Activated T-helper 1 cell treated with anti-CD3 and anti-CD28 coated beads, Interleukin-12 subunit alpha, Interleukin-12 subunit beta, Interleukin-2, Interleukin-4 antibody, amounts not matched to agents 30 ng/mL and 10 ng/mL and 1 ng/mL, durations not matched to agents 14 hours and 24 hours and 36 hours (primary cell): ENCODE measurements at regions of chr7 and their contacts with region 1.

Region 1: GRCh38 chr7:50142425-50143017 is 49.5 kb upstream of the ZPBP start:
- DNase-seq: no peak
- H3K4me3 Mint-ChIP-seq: peak overlapping the region; percentile 27
- H3K27ac Mint-ChIP-seq: peak overlapping the region; percentile 2
- H3K4me1 Mint-ChIP-seq: peaks cover 34% of the 10 kb centered on the region
- H3K27me3 Mint-ChIP-seq: peaks cover 11% of the 10 kb centered on the region

Region 2: DNA sequence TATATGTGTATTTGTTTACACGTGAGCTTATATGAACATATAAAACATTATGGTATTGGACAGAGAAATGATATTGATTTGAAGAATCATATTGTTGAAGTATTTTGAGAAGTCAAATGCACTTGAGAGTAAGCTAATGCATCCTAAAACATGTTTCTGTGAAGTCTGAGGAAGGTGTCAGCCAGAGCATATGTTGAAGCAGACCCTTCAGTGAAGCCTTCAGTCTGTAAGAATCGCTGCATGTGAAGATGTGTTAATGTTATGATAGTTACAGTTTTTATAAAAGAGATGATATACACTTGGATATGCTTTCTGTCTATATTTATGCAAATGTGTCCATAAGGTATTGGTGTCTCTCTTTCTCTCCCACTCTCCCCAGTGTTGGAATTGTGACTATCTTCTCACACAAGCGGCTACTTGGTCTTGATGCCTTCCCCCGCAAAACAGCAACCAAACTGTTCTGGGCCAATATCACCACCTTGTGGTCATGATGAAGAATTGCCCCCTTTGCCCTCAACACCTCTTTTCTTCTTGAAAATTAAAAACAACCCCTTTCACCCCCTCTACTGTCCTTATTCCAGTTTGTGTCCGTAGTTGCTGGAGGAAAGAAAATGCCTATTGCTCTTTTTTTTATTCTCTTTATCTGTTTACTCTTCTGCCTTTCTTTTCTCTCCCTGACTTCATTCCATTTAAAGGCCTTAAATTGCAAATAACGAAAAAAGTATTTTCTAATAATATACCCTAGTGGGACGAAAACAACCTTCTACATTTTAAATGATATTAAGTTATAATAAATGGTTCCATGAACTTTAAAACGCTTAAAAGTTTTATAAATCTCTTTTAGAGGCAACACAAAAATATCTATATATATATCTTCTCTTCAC is 226.9 kb after region 1 on chr7:
- intact Hi-C with region 1: loop called (anchors 1 kb)
- DNase-seq: no peak
- H3K4me3 Mint-ChIP-seq: peak overlapping the region; percentile 45
- H3K27ac Mint-ChIP-seq: peak overlapping the region; percentile 85
- H3K4me1 Mint-ChIP-seq: peaks cover 100% of the 10 kb centered on the region
- H3K27me3 Mint-ChIP-seq: no peaks in the 10 kb centered on the region

Region 3: GRCh38 chr7:50467817-50468610 is 325.5 kb after region 1 on chr7:
- intact Hi-C with region 1: loop called (anchors 2 kb)
- DNase-seq: peak; percentile 69
- H3K4me3 Mint-ChIP-seq: no peak overlapping the region
- H3K27ac Mint-ChIP-seq: no peak overlapping the region
- H3K4me1 Mint-ChIP-seq: peaks cover 12% of the 10 kb centered on the region
- H3K27me3 Mint-ChIP-seq: peaks cover 12% of the 10 kb centered on the region

Region 4: DNA sequence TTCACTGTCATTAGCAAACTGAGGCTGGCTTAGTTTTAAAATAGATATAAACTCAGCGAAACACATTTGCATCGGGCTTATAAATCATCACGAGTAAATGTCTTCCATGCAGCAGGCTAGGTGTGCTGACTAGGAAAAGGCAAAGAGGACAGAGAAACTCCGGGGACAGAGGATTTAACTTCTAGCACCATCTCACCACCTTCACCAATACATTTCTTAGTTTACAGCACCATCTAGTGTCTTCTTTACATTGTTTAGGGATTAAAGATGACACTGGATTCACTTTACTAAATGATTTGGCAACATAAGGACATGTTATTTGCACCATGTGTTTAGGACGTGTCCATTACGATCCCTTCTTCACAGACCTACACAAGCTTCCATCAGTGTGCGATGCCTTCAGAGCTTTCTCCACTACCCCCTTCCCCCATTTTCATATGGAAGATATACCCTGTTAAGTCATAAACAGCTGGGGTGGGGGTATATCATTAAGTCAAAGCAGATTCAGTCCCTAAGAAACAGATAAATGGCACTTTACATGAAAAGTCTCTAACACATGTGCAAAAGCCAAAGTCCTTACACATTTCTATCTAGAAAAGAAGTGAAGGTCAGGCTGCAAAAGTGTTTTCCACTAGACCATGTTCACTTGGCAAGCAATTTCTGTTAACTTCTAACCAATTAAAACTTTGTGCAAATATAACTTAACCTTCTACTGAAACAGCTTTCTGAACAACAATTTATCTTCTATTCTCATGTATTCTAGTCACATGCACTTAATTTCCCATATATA is 536.9 kb after region 1 on chr7:
- intact Hi-C with region 1: loop called (anchors 1 kb)
- DNase-seq: no peak
- H3K4me3 Mint-ChIP-seq: no peak overlapping the region
- H3K27ac Mint-ChIP-seq: no peak overlapping the region
- H3K4me1 Mint-ChIP-seq: no peaks in the 10 kb centered on the region
- H3K27me3 Mint-ChIP-seq: peaks cover 11% of the 10 kb centered on the region